ENCODE measurements at regions of chr2 and their contacts with region 1.

Region 1: GRCh38 chr2:165105926-165106325 is 97.9 kb downstream of the SCN3A start:
- DNase-seq: no peak
- ATAC-seq: no peak
- H3K4me3 ChIP-seq: no peak overlapping the region
- H3K4me3 Mint-ChIP-seq: no peak overlapping the region
- H3K27ac ChIP-seq: no peak overlapping the region
- H3K27ac Mint-ChIP-seq: no peak overlapping the region
- H3K4me1 ChIP-seq: no peaks in the 10 kb centered on the region
- H3K4me1 Mint-ChIP-seq: no peaks in the 10 kb centered on the region
- H3K27me3 ChIP-seq: no peaks in the 10 kb centered on the region
- H3K27me3 Mint-ChIP-seq: no peaks in the 10 kb centered on the region
- CTCF ChIP-seq: no peak

Region 2: GRCh38 chr2:165757906-165758675 is 652.2 kb after region 1 on chr2:
- CTCF ChIA-PET with region 1: no interaction called
- POLR2A ChIA-PET with region 1: no interaction called
- intact Hi-C with region 1: loop called (anchors 5 kb)
- DNase-seq: no peak
- ATAC-seq: no peak
- H3K4me3 ChIP-seq: no peak overlapping the region
- H3K4me3 Mint-ChIP-seq: no peak overlapping the region
- H3K27ac ChIP-seq: no peak overlapping the region
- H3K27ac Mint-ChIP-seq: no peak overlapping the region
- H3K4me1 ChIP-seq: no peaks in the 10 kb centered on the region
- H3K4me1 Mint-ChIP-seq: no peaks in the 10 kb centered on the region
- H3K27me3 ChIP-seq: no peaks in the 10 kb centered on the region
- H3K27me3 Mint-ChIP-seq: no peaks in the 10 kb centered on the region
- CTCF ChIP-seq: no peak

Measured in B cell (primary cell).